ENCODE measurements at regions of chr6 and their contacts with region 1.

Region 1: DNA sequence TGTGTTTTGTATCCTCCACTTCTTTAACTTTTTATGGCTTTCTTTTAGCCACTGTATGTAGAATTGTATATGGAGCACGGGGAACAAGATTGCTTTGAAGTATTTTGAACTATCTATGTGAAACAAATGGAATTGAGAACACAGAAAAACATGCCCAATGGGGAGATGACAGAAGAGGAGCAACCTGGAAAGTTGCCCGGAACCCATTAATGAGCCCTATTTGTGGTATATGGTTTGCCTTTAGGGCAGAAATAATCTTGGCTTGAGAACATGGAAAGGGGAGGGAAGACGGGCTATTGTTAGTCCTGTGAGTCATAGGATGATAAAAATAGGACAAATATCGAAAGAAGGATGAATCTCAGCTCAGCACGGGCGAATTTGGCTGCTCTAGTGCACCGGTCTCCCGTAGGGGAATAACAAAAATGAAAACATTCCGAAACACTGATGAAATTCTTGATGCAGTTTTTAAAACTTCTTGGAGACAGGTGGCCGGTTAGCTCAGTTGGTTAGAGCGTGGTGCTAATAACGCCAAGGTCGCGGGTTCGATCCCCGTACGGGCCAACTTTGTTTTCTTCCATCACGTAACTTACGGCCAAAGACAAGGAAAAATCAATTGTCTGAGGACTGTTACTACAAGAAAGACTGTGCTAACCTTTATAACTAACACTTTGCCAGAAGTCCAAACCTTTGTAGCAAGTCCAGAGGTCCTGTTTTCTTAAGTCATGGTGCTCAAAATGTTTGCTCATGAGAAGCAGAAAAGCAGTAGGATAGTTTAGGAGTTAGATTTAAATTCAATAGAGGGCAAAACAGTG is 15.7 kb downstream of the HMGN4 start:
- DNase-seq: peak; percentile 93
- H3K4me3 ChIP-seq: peak overlapping the region; percentile 29 to 94 (median 70)
- H3K27ac ChIP-seq: peak overlapping the region; percentile 71
- H3K4me1 ChIP-seq: peaks cover 13% of the 10 kb centered on the region
- H3K27me3 ChIP-seq: no peaks in the 10 kb centered on the region
- CTCF ChIP-seq: no peak
- POLR2A ChIP-seq: no peak

Region 2: GRCh38 chr6:26175428-26176181 is 378.2 kb before region 1 on chr6:
- CTCF ChIA-PET with region 1: interaction called, 4 read pairs
- POLR2A ChIA-PET with region 1: no interaction called
- dilution Hi-C with region 1: no loop called
- intact Hi-C with region 1: loop called (anchors 10 kb)
- DNase-seq: peak; percentile 85
- H3K4me3 ChIP-seq: no peak overlapping the region
- H3K27ac ChIP-seq: no peak overlapping the region
- H3K4me1 ChIP-seq: peaks cover 11% of the 10 kb centered on the region
- H3K27me3 ChIP-seq: no peaks in the 10 kb centered on the region
- CTCF ChIP-seq: peak; percentile 46 to 51
- POLR2A ChIP-seq: no peak

Region 3: GRCh38 chr6:26322645-26323482 is 231.0 kb before region 1 on chr6:
- CTCF ChIA-PET with region 1: interaction called, 3 read pairs
- POLR2A ChIA-PET with region 1: no interaction called
- dilution Hi-C with region 1: loop called (anchors 25 kb)
- intact Hi-C with region 1: loop called (anchors 1 kb)
- DNase-seq: peak; percentile 90
- H3K4me3 ChIP-seq: peak overlapping the region; percentile 50 to 85 (median 85)
- H3K27ac ChIP-seq: peak overlapping the region; percentile 44
- H3K4me1 ChIP-seq: peaks cover 6% of the 10 kb centered on the region
- H3K27me3 ChIP-seq: no peaks in the 10 kb centered on the region
- CTCF ChIP-seq: no peak
- POLR2A ChIP-seq: no peak

Region 4: DNA sequence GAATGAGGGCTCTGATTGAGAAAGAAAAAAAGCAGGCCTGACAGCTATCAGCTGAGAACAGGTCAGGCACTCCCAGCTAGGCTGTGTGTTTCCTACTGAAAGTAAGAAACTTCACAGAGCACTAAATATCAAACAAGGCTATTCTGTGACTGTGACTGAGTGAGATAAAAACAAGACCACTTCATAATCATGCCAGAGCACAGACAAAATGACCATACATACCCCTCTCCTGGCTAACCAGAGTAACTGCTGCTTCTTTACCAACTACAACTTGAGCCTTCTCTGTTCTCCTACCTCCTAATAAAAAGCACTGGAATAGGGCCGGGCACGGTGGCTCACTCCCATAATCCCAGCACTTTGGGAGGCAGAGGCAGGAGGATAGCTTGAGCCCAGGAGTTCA is 60.6 kb before region 1 on chr6:
- CTCF ChIA-PET with region 1: no interaction called
- POLR2A ChIA-PET with region 1: no interaction called
- dilution Hi-C with region 1: no loop called
- intact Hi-C with region 1: no loop called
- DNase-seq: peak; percentile 19
- H3K4me3 ChIP-seq: no peak overlapping the region
- H3K27ac ChIP-seq: no peak overlapping the region
- H3K4me1 ChIP-seq: no peaks in the 10 kb centered on the region
- H3K27me3 ChIP-seq: peaks cover 11 to 37% of the 10 kb centered on the region in 2 experiments
- CTCF ChIP-seq: peak; percentile 4 to 28
- POLR2A ChIP-seq: no peak

Region 5: GRCh38 chr6:26520853-26521599 is 32.8 kb before region 1 on chr6:
- CTCF ChIA-PET with region 1: interaction called, 3 read pairs
- POLR2A ChIA-PET with region 1: no interaction called
- dilution Hi-C with region 1: no loop called
- intact Hi-C with region 1: loop called (anchors 1 kb)
- DNase-seq: peak; percentile 88
- H3K4me3 ChIP-seq: peak overlapping the region; percentile 46 to 82 (median 79)
- H3K27ac ChIP-seq: peak overlapping the region; percentile 76
- H3K4me1 ChIP-seq: peaks cover 10% of the 10 kb centered on the region
- H3K27me3 ChIP-seq: no peaks in the 10 kb centered on the region
- CTCF ChIP-seq: no peak
- POLR2A ChIP-seq: peak; percentile 68

Region 6: GRCh38 chr6:26568601-26569432 is 15.0 kb after region 1 on chr6:
- CTCF ChIA-PET with region 1: interaction called, 36 read pairs
- POLR2A ChIA-PET with region 1: interaction called, 4 read pairs
- dilution Hi-C with region 1: no loop called
- intact Hi-C with region 1: loop called (anchors 1 kb)
- DNase-seq: peak; percentile 97
- H3K4me3 ChIP-seq: peak overlapping the region; percentile 50 to 95 (median 90)
- H3K27ac ChIP-seq: no peak overlapping the region
- H3K4me1 ChIP-seq: peaks cover 6% of the 10 kb centered on the region
- H3K27me3 ChIP-seq: no peaks in the 10 kb centered on the region
- CTCF ChIP-seq: peak in 1 of 2 donors; percentile 46
- POLR2A ChIP-seq: no peak